ENCODE measurements at regions of chr11 and their contacts with region 1.

Region 1: DNA sequence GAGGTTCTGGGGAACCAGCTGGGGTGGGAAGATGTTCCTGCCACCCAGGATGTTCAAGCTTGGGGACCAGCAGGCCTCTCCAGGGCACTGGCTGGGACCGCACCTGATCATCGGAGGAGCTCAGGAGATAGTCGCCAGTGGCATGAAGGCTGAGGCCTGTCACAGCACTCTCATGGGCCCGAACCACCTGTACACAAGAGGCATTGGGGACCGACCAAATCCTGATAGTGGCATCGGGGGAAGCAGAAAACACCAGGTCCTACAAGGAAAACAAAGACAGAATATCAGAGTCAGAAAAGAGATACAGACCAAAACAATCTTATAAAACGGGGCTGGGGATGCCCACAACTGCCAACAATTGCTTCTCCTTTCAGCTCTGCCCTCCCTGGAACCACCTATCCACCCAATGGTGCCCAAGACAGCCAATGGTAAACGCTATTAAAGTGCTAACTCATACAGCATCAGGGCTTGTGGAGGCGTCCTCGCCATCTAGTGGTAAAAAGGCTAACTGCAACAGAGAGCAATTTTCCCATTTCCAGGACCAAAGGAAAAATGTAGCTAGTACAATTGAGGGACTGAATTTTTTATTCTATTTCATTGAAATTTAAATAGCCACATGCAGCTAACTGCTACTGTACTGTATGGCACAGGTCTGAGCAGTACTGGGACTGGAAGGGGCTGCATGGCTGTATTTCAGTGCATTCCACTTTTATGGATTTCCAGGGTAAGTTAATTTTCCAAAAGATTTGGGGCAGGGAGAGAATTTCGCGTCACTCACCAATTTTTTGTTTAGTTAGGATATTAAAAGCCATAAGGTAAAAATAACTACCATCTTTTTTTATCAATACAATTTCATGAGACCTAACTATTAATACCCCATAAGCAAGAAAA is 7.1 kb downstream of the PRPF19 start:
- DNase-seq: peak in 4 of 9 experiments; percentile 28 to 70 (median 47)
- ATAC-seq: peak; percentile 88
- H3K4me3 ChIP-seq: no peak overlapping the region
- H3K4me3 Mint-ChIP-seq: no peak overlapping the region
- H3K27ac ChIP-seq: no peak overlapping the region
- H3K27ac Mint-ChIP-seq: no peak overlapping the region
- H3K4me1 ChIP-seq: peaks cover 10% of the 10 kb centered on the region
- H3K4me1 Mint-ChIP-seq: peaks cover 16% of the 10 kb centered on the region
- H3K27me3 ChIP-seq: no peaks in the 10 kb centered on the region
- H3K27me3 Mint-ChIP-seq: no peaks in the 10 kb centered on the region
- CTCF ChIP-seq: peak; percentile 99

Region 2: DNA sequence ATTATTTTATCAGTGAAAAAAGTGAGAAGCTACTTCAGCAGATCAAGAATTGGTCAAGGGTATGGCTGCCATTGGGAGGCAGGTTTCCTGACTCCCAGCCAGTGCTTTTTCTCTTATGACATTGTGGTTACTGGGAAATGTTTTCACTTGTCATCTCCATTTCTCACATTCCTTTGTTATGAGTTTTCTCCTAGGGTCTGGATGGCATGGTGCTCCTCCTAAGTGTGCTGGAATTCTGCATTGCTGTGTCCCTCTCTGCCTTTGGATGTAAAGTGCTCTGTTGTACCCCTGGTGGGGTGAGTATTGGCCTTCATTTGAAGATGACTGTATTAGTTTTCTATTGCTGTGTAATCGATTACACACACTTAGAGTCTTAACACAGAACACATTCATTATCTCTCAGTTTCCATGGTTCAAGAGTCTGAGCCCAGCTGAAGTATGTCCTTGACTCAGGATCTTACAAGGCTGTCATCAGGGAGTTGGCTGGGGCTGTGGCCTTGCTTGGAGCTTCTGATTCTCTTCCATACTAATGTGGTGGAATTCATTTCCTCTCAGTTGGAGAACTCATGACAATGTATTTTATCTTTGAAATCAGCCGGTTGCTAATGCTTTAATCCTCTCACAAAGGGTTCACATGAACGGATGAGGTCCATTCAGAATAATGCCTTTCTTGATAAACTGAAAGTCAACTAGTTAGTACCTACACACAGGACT is 593.2 kb before region 1 on chr11:
- CTCF ChIA-PET with region 1: no interaction called
- POLR2A ChIA-PET with region 1: no interaction called
- intact Hi-C with region 1: no loop called
- DNase-seq: no peak
- ATAC-seq: no peak
- H3K4me3 ChIP-seq: no peak overlapping the region
- H3K4me3 Mint-ChIP-seq: no peak overlapping the region
- H3K27ac ChIP-seq: no peak overlapping the region
- H3K27ac Mint-ChIP-seq: no peak overlapping the region
- H3K4me1 ChIP-seq: no peaks in the 10 kb centered on the region
- H3K4me1 Mint-ChIP-seq: no peaks in the 10 kb centered on the region
- H3K27me3 ChIP-seq: no peaks in the 10 kb centered on the region
- H3K27me3 Mint-ChIP-seq: peaks cover 7% of the 10 kb centered on the region
- CTCF ChIP-seq: no peak

Region 3: DNA sequence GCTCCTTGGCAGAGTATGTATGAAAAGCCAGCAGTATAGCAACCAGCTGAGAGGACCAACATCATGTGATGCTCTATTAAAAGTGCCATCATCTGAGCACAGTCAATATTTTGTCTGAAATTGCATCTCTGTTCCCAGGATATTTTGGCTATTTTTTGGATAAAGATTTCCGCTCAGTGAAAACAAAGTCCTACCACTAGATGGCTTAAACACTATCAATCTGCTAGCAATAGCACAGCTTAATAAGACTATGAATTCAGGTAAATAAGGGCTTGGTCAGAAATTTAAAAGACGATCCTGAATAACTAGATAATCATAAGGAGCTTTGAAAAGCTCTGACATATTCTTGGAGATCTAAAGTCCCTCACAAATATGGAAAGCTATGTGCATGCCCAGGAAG is 309.7 kb before region 1 on chr11:
- CTCF ChIA-PET with region 1: no interaction called
- POLR2A ChIA-PET with region 1: no interaction called
- intact Hi-C with region 1: no loop called
- DNase-seq: no peak
- ATAC-seq: no peak
- H3K4me3 ChIP-seq: no peak overlapping the region
- H3K4me3 Mint-ChIP-seq: no peak overlapping the region
- H3K27ac ChIP-seq: no peak overlapping the region
- H3K27ac Mint-ChIP-seq: no peak overlapping the region
- H3K4me1 ChIP-seq: no peaks in the 10 kb centered on the region
- H3K4me1 Mint-ChIP-seq: no peaks in the 10 kb centered on the region
- H3K27me3 ChIP-seq: no peaks in the 10 kb centered on the region
- H3K27me3 Mint-ChIP-seq: no peaks in the 10 kb centered on the region
- CTCF ChIP-seq: no peak

Region 4: GRCh38 chr11:60775420-60775961 is 123.8 kb before region 1 on chr11:
- CTCF ChIA-PET with region 1: interaction called, 3 read pairs
- POLR2A ChIA-PET with region 1: no interaction called
- intact Hi-C with region 1: loop called in 1 of 2 experiments (anchors 1 kb)
- DNase-seq: peak; percentile 65 to 90 (median 84)
- ATAC-seq: peak; percentile 98
- H3K4me3 ChIP-seq: no peak overlapping the region
- H3K4me3 Mint-ChIP-seq: peak overlapping the region; percentile 13
- H3K27ac ChIP-seq: no peak overlapping the region
- H3K27ac Mint-ChIP-seq: peak overlapping the region; percentile 18
- H3K4me1 ChIP-seq: peaks cover 4% of the 10 kb centered on the region
- H3K4me1 Mint-ChIP-seq: peaks cover 10% of the 10 kb centered on the region
- H3K27me3 ChIP-seq: no peaks in the 10 kb centered on the region
- H3K27me3 Mint-ChIP-seq: peaks cover 3% of the 10 kb centered on the region
- CTCF ChIP-seq: peak; percentile 81

Region 5: DNA sequence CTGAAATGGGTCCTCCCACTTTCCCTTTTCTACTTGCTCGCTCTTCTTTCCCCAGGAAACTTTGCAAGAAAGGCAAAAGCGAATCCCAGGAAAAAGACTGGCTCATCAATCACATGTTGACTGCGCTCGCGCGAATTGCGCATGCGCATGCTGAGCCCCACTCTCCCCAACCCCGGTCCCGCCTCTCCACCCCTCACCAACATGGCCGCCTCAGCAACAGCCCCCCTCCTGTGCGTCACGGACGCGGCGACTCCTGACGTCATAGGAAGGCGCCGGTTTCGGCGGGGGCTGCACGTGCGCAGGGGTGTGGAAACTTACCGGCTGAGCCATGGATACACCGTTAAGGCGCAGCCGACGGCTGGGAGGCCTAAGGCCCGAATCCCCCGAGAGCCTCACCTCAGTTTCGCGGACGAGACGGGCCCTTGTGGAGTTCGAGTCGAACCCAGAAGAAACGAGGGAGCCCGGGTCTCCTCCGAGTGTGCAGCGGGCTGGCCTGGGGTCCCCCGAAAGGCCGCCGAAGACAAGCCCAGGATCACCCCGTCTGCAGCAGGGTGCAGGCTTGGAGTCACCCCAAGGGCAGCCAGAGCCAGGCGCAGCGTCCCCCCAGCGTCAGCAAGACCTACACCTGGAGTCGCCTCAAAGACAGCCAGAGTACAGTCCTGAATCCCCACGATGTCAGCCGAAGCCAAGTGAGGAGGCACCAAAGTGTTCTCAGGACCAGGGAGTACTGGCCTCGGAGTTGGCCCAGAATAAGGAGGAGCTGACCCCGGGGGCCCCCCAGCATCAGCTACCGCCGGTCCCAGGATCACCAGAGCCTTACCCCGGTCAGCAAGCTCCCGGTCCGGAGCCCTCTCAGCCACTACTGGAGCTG is 57.3 kb before region 1 on chr11 and contains the start of gene CCDC86:
- CTCF ChIA-PET with region 1: interaction called, 163 read pairs
- POLR2A ChIA-PET with region 1: no interaction called
- intact Hi-C with region 1: no loop called
- DNase-seq: peak; percentile 97 to 100 (median 98)
- ATAC-seq: peak; percentile 97
- H3K4me3 ChIP-seq: peak within 1 kb of the TSS; percentile 84 to 93
- H3K4me3 Mint-ChIP-seq: peak within 1 kb of the TSS; percentile 93
- H3K27ac ChIP-seq: peak within 1 kb of the TSS; percentile 71 to 83
- H3K27ac Mint-ChIP-seq: peak within 1 kb of the TSS; percentile 97
- H3K4me1 ChIP-seq: peaks cover 35% of the 10 kb centered on the region
- H3K4me1 Mint-ChIP-seq: peaks cover 46% of the 10 kb centered on the region
- H3K27me3 ChIP-seq: no peaks in the 10 kb centered on the region
- H3K27me3 Mint-ChIP-seq: no peaks in the 10 kb centered on the region
- CTCF ChIP-seq: no peak
- total RNA-seq, gene CCDC86: 10.8 to 11.9 TPM

Region 6: DNA sequence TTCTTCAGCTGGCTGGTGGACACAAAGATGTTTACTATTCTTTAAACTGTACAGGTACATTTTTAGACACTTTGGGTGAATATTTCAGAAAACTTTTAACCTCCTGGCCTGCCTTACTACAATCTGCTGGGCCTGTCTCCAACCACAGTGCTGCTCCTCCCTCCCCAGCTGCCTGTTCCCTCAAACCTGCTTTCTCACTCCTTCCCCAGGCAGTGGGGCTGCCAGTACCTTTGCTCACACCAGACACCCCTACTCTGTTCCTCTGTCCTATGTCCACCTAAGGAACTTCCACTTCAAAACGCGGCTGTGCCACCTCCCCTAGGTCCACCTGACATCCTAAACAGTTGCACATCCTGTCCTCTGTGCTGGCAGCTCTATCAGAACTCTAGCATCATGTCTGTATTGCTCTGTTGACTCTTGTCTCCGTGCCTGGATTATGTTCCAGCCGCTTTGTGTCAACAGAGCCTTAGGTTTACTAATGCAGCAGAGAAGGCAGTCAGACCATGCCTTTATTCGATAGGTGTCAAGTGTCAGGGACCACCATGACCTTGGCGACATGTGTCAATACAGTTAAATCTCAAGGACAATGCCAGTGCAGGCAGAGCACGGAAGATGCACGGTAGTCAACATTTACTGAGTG is 18.5 kb before region 1 on chr11:
- CTCF ChIA-PET with region 1: interaction called, 10 read pairs
- POLR2A ChIA-PET with region 1: no interaction called
- intact Hi-C with region 1: no loop called
- DNase-seq: no peak
- ATAC-seq: no peak
- H3K4me3 ChIP-seq: no peak overlapping the region
- H3K4me3 Mint-ChIP-seq: no peak overlapping the region
- H3K27ac ChIP-seq: no peak overlapping the region
- H3K27ac Mint-ChIP-seq: peak overlapping the region; percentile 41
- H3K4me1 ChIP-seq: no peaks in the 10 kb centered on the region
- H3K4me1 Mint-ChIP-seq: peaks cover 6% of the 10 kb centered on the region
- H3K27me3 ChIP-seq: no peaks in the 10 kb centered on the region
- H3K27me3 Mint-ChIP-seq: no peaks in the 10 kb centered on the region
- CTCF ChIP-seq: no peak

Region 7: DNA sequence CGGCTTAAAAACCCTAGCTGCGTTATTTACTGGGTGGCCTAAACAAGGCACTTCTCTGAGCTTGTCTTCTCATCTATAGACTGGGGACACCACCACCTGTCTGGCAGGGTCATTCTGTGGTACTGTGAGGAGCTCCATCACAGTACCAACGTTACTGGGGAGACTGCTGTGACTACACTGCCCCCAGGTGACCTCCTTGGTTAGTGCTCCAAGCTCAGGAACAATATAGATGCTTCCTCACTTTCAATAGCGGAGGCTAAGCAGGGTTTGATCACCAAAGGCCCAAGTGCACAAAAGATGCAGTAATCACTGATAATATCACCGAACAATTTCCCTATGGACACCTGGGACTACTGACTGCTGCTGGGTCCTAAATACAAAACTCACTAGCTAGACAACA is 11.7 kb before region 1 on chr11:
- CTCF ChIA-PET with region 1: interaction called, 18 read pairs
- POLR2A ChIA-PET with region 1: no interaction called
- intact Hi-C with region 1: no loop called
- DNase-seq: peak in 7 of 9 experiments; percentile 33 to 66 (median 49)
- ATAC-seq: peak; percentile 82
- H3K4me3 ChIP-seq: no peak overlapping the region
- H3K4me3 Mint-ChIP-seq: no peak overlapping the region
- H3K27ac ChIP-seq: no peak overlapping the region
- H3K27ac Mint-ChIP-seq: no peak overlapping the region
- H3K4me1 ChIP-seq: no peaks in the 10 kb centered on the region
- H3K4me1 Mint-ChIP-seq: peaks cover 6% of the 10 kb centered on the region
- H3K27me3 ChIP-seq: no peaks in the 10 kb centered on the region
- H3K27me3 Mint-ChIP-seq: no peaks in the 10 kb centered on the region
- CTCF ChIP-seq: peak; percentile 52

Measured in CD8-positive, alpha-beta T cell (primary cell).